ENCODE measurements at regions of chr19 and their contacts with region 1.

Region 1: GRCh38 chr19:12139885-12140547 is at the start of gene ZNF20:
- H3K4me3 ChIP-seq: peak within 1 kb of the TSS; percentile 63
- H3K27ac ChIP-seq: no peak within 1 kb of the TSS
- H3K4me1 ChIP-seq: no peaks in the 10 kb centered on the region
- CTCF ChIP-seq: no peak

Region 2: DNA sequence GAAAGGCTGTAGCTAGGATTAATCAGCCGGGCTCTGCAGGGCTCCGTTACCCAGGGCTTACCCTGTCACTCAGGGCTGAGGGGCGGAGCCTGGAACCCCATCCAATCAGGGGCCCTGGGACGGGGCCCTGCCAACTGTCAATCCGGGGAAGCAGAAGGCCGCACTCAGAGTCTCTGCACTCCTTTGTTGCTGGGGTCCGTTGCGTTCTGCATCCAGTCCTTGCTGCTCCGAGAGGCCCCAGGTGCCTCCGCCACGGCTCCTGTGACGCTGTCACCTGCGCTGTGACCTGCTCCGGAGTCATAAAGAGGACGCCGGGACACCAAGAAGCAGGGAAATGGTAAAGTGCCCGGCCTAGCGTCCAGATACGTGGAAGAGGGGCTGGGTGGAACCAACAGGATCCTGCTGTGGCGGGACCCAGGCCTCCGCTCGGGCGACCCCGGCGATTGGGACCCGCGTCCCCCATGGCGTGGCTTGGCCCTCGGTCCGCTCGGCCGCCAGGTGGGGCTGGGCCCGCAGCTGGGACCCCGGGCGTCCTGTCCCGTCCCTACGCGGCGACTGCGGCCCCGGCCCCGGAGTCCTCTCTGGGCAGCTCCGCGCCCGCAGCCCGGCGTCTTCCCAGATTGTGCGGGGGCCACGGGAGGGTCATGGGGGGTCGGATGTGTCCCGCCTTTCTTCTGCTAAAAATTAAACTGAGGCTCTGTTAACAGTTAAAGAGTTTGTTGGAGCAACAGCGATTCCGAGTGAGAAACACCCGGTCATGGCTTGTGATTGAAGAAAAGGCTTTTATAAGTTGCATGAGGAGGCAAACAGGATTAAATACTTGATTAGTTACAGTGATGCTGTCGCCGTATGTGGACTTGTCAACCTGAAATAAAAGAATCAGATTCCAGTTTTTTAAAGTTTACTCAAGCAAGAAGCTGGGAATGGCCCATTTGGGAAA is 341.4 kb before region 1 on chr19 and contains the start of gene ZNF491:
- CTCF ChIA-PET with region 1: interaction called, 11 read pairs
- POLR2A ChIA-PET with region 1: interaction called, 4 read pairs
- H3K4me3 ChIP-seq: peak within 1 kb of the TSS; percentile 55
- H3K27ac ChIP-seq: no peak within 1 kb of the TSS
- H3K4me1 ChIP-seq: no peaks in the 10 kb centered on the region
- CTCF ChIP-seq: no peak

Region 3: DNA sequence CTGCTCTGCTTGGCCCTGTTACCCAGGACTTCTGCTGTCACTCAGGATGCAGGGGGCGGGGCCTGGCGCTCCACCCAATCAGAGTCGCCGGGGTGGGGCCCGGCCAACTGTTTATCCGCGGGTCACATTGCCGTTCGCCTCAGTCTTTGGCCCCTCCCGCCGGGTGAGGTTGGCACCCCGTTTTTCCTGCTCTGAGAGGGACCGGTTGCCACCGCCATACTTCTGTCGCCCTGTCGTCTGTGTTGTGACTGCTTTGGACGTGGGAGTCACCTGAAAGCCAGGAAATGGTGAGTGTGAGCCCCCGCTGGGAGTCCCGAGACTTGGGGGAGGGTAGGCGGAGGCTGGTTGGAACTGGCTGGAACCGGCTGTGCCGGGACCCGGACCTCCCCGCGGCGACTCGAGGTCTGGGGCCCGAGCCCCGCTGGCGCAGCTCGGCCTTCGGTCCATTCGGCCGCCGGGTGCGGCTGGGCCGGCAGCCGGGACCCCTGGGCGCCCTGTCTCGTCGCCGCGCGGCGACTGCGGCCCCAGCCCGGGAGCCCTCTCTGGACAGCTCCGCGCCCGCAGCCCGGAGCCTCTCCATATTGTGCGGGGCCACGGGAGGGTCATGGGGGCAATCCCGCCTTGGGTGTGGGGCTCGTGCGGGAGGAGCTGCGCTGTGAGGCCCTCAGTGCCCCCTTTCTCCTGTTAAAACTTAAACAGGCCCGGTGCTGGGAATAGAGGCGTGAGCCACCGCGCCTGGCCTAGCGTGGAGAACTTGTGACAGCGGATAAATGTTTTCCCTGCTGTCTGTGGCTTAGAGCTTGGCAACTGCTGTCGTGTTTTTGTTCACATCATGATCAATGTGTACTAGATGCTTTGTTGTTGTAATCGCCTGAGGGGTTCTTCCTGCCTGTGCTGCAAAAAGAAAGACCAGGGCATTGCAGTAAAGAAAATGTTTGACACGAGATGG is 75.2 kb before region 1 on chr19 and contains the start of gene ZNF844:
- CTCF ChIA-PET with region 1: interaction called, 17 read pairs
- POLR2A ChIA-PET with region 1: no interaction called
- H3K4me3 ChIP-seq: peak within 1 kb of the TSS; percentile 42
- H3K27ac ChIP-seq: no peak within 1 kb of the TSS
- H3K4me1 ChIP-seq: no peaks in the 10 kb centered on the region
- CTCF ChIP-seq: no peak

Region 4: DNA sequence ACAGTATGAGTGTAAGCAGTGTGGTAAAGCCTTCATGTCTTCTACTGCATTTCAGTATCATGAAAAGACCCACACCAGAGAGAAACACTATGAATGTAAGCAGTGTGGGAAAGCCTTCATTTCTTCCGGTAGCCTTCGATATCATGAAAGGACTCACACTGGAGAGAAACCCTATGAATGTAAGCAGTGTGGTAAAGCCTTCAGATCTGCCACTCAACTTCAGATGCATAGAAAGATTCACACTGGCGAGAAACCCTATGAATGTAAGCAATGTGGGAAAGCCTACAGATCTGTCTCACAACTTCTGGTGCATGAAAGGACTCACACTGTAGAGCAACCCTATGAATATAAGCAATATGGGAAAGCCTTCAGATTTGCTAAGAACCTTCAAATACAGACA is 62.6 kb before region 1 on chr19:
- CTCF ChIA-PET with region 1: no interaction called
- POLR2A ChIA-PET with region 1: no interaction called
- H3K4me3 ChIP-seq: no peak overlapping the region
- H3K27ac ChIP-seq: no peak overlapping the region
- H3K4me1 ChIP-seq: no peaks in the 10 kb centered on the region
- CTCF ChIP-seq: no peak

Region 5: DNA sequence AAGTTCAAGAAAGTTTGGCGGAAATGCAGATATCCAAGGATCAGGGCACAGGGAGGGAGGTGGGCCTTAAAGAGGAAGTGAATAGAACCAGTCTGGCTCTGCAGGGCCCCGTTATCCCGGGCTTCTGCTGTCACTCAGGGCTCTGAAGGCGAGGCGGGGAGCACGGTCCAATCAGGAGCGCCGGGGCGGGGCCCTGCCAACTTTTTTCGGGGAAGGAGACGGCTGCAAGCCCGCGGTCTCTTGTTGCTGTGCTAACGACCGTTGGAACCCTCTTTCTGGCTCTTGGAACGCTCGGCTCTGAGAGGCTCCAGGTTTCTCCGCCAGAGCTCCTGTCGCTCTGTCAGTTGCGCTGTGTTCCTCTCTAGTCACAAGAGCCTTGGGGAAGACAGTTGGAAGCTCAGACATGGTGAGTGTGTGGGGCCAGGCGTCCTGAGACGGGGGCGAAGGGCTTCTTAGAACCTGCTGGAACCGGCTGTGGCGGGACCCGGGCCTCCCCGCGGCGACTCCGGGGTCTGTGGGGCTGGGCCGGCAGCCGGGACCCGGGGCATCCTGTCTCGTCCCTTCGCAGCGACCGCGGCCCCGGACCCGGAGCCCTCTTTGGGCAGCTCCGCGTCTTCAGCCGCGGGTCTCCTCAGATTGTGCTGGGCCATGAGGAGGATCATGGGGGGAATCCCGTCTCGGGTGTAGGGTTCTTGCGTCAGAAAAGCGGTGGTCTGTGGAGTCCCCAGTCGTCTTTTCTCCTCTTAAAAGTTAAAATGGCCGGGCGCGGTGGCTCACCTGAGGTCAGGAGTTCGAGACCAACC is 47.8 kb before region 1 on chr19:
- CTCF ChIA-PET with region 1: interaction called, 15 read pairs
- POLR2A ChIA-PET with region 1: interaction called, 3 read pairs
- H3K4me3 ChIP-seq: peak overlapping the region; percentile 35
- H3K27ac ChIP-seq: no peak overlapping the region
- H3K4me1 ChIP-seq: no peaks in the 10 kb centered on the region
- CTCF ChIP-seq: no peak

Region 6: GRCh38 chr19:12156223-12157058 is 16.4 kb after region 1 on chr19 and contains the start of gene ZNF625:
- CTCF ChIA-PET with region 1: interaction called, 5 read pairs
- POLR2A ChIA-PET with region 1: interaction called, 20 read pairs
- H3K4me3 ChIP-seq: peak within 1 kb of the TSS; percentile 89
- H3K27ac ChIP-seq: peak within 1 kb of the TSS; percentile 54
- H3K4me1 ChIP-seq: no peaks in the 10 kb centered on the region
- CTCF ChIP-seq: no peak